ENCODE measurements at regions of chr4 and their contacts with region 1.

Region 1: DNA sequence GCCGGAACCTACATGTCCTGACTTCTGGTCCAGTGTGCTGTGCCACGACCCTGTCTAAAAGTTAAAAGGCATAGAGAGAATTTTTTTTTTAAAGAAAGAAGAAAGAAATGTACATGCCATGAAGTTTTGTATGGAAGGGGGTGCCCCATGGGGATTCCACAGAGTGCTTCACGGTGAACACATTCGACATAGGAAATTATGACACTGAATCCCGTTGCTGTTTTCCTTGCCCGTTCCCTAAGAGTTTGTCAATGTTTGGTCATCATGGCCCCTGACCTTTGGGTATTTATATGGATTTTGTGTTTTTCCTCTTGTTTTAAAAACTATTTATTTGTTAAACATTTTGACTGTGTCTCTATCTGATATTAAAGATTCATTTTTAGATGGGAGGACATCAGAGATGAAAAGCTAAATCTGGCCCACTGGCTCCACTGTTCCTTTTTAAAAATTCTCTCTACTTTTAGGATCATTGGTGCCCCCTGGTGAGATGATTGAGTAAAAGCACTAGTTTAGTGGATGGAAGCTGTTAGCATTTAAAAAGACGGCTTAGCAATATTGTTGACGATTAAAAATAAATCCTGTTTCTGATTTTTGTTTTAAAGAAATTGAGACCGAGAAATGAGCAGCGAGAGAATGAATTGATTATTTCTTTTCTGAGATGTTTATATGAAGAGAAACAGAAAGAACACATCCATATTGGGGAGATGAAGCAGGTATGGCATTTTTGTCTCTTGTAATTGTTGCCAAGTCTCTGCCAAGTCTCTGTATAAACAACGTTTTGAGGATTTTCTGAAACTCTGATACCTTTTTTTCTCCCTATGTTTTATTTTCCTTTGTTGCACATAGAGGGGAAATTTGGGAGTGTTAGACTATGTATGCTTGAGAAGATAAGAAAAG is 75.0 kb downstream of the PTTG2 start:
- DNase-seq: no peak
- ATAC-seq: peak; percentile 68

Region 2: GRCh38 chr4:37802068-37802666 is 233.1 kb before region 1 on chr4:
- intact Hi-C with region 1: loop called (anchors 2 kb)
- DNase-seq: peak; percentile 51
- ATAC-seq: peak; percentile 89

Region 3: GRCh38 chr4:37889849-37890800 is 145.1 kb before region 1 on chr4:
- intact Hi-C with region 1: loop called (anchors 10 kb)
- DNase-seq: peak; percentile 90
- ATAC-seq: peak; percentile 91

Region 4: DNA sequence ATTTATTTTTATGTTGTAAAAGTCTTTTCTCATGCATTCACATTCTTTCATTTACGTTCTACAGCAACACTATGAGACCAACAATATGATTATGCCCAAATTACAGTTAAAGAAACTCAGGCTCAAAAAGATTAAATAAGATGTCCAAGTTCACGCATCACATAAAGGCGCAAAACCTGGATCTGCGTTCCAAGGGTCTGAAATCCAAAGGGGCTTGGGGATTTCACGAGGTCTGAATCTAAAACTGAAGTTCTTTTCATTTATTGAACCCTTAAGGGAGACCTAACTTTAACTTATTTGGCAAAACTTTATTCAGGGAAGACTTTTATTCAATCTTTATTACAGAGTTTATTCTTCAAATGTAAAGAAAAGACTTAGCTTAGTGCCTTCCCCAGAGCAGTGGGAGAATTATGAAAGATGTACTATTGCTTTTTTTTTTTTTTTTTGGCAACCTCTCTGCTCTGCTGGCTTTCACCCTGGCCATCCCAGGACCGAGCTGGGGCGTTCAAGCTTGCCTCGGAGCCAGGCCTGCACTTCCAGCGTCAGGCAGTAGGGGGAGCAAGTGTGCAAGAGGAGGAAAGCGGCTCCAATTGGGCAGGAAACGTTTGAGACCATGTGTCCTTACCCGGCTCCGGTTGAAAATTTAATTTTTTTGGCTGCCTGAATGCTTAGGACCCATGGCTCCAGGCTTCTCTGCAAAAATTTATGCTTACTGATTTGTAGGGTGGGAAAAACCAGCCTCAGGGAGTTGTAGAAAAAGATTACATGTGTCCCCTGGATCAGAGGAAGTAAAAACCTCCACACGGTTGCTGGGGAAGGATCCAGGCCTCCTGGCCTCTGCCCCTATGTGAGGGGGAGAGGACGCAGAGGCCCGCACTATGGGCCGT is 284.5 kb after region 1 on chr4:
- intact Hi-C with region 1: no loop called
- DNase-seq: peak; percentile 96
- ATAC-seq: peak; percentile 86

Measured in left ventricle myocardium superior (tissue), 1 donor.